ENCODE measurements at regions of chr6 and their contacts with region 1.

Region 1: DNA sequence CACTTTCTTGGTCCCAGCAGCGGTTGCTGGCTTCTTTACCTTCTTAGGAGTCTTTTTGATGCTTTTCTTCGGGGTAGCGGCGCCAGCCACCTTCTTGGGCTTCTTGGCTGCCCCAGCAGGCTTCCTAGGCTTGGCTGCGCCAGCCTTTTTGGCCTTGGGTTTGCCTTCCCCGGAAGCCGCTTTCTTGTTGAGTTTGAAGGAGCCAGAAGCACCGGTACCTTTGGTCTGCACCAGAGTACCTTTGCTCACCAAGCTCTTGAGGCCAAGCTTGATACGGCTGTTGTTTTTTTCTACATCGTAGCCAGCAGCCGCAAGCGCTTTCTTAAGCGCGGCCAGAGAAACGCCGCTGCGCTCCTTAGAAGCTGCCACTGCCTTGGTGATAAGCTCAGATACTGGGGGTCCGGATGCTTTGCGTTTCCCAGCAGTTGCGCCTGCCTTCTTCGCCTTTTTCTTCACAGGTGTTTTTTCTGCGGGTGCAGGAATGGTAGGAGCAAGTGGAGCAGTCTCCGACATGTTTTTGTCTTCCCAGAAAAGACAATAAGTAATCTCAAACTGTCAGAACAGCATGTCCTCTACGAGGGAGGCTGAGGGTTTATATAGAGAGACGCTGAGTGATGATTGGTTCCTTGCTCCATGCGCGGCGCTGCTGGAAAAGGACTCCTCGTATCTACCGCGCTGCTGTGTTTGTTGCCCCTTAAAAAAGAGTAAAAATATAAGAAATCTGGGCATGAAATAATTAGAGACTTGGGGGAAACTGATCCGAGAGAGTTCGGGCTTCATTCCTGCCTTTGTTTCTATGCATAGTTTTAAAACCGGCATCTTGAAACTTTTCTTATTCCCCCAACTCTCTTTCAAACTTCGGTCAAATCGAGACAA is 130.3 kb upstream of the BTN3A2 start:
- DNase-seq: peak; percentile 76
- ATAC-seq: peak; percentile 59
- H3K4me3 Mint-ChIP-seq: peak overlapping the region; percentile 94
- H3K27ac Mint-ChIP-seq: peak overlapping the region; percentile 100
- H3K4me1 Mint-ChIP-seq: peaks cover 36% of the 10 kb centered on the region
- H3K27me3 Mint-ChIP-seq: no peaks in the 10 kb centered on the region

Region 2: DNA sequence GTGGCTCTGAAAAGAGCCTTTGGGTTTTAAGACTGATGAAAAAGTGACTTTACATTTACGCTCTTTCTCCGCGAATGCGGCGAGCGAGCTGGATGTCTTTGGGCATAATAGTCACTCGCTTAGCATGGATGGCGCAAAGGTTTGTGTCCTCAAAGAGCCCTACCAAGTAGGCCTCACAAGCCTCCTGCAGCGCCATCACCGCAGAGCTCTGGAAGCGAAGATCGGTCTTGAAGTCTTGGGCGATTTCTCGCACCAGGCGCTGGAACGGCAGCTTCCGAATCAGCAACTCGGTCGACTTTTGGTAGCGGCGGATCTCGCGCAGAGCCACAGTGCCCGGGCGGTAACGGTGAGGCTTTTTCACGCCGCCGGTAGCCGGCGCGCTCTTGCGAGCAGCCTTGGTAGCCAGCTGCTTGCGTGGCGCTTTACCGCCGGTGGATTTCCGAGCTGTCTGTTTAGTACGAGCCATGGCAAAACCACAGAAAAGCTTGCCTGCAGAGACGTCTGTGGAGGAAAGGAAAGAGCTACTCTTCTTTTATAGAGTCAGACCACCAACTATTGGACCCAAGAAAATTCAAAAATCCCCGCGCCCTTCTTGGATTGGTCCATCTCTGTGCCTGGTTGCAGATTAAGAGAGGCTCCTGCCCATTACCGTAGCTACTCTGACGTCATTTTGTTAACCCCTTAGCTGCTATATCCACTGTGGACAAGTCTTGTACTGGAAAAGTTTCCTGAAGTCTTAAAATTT is 202.9 kb before region 1 on chr6:
- POLR2A ChIA-PET with region 1: interaction called, 119 read pairs
- DNase-seq: peak; percentile 84
- ATAC-seq: peak; percentile 66
- H3K4me3 Mint-ChIP-seq: peak overlapping the region; percentile 88
- H3K27ac Mint-ChIP-seq: peak overlapping the region; percentile 98
- H3K4me1 Mint-ChIP-seq: peaks cover 66% of the 10 kb centered on the region
- H3K27me3 Mint-ChIP-seq: peaks cover 3% of the 10 kb centered on the region

Region 3: DNA sequence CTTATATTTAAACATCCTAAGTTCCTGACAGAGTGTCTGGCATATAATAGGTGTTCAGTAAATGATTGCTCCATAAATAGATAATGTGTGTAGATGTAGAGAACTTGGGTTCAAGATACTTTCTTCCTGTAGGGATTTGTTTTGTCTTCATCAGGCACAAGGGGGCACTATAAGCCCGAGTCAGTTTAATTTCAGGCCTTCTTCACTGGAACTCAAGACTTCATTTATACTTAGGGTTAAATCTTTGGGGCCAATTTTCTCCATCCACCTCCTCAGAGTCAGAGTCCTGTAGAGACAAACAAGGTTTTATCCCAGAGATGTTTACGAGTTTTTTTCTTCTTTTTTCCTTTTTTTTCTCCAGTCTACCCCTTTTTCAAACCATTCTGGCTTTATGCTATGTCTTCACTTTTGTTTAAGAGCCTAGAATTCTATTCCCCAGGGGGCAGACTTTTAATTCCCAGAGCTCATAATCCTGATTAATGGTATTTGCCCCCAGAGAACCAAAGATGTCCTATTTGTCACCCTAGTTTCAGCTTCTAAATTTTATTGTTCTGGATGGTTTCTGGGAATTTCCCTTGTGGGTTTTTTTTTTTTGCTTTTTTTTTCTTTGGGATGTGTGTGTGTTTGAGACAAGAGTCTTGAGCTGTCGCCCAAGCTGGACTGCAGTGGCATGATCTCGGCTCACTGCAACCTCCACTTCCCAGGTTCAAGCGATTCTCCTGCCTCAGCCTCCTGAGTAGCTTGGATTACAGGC is 59.1 kb before region 1 on chr6:
- POLR2A ChIA-PET with region 1: interaction called, 126 read pairs
- DNase-seq: no peak
- ATAC-seq: no peak
- H3K4me3 Mint-ChIP-seq: peak overlapping the region; percentile 54
- H3K27ac Mint-ChIP-seq: peak overlapping the region; percentile 76
- H3K4me1 Mint-ChIP-seq: peaks cover 41% of the 10 kb centered on the region
- H3K27me3 Mint-ChIP-seq: no peaks in the 10 kb centered on the region

Region 4: GRCh38 chr6:26216356-26216885 is 18.2 kb before region 1 on chr6:
- POLR2A ChIA-PET with region 1: interaction called, 425 read pairs
- DNase-seq: peak; percentile 77
- ATAC-seq: peak; percentile 75
- H3K4me3 Mint-ChIP-seq: no peak overlapping the region
- H3K27ac Mint-ChIP-seq: no peak overlapping the region
- H3K4me1 Mint-ChIP-seq: peaks cover 32% of the 10 kb centered on the region
- H3K27me3 Mint-ChIP-seq: no peaks in the 10 kb centered on the region

Region 5: DNA sequence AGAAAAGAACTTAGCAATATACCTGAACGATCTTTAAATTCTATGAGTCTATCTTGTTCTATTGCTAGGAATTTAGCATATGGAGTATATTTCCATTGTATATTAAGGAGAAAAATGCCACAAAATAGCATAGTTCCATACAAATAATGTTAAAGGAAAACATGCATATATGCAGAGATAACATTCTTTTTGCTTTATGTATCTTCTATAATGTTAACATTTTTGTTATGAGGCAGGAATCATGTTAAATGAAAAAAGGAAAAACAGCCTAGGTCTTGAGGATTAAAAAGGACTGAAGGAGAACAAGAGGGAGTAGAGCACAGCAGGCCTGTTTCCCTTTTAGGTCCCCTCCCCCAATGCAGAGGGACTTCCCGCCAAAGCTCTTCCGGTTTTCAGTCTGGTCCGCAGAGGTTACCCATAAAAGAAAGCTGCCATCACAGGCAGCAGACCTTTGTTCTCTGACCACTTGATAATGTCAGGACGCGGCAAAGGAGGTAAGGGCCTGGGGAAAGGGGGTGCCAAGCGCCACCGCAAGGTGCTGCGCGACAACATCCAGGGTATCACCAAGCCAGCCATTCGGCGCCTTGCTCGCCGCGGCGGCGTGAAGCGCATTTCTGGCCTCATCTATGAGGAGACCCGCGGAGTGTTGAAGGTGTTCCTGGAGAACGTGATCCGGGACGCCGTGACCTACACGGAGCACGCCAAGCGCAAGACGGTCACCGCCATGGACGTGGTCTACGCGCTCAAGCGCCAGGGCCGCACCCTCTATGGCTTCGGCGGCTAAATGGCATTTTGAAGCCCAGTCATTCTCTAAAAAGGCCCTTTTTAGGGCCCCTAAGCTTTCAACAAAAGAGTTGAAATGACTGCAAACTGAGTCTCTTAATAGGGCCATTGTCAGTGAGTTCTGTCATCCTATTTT is 904.4 kb after region 1 on chr6:
- POLR2A ChIA-PET with region 1: interaction called, 57 read pairs
- DNase-seq: peak; percentile 81
- ATAC-seq: peak; percentile 73
- H3K4me3 Mint-ChIP-seq: peak overlapping the region; percentile 95
- H3K27ac Mint-ChIP-seq: peak overlapping the region; percentile 98
- H3K4me1 Mint-ChIP-seq: peaks cover 39% of the 10 kb centered on the region
- H3K27me3 Mint-ChIP-seq: no peaks in the 10 kb centered on the region

Region 6: GRCh38 chr6:27864906-27865849 is 1630.5 kb after region 1 on chr6:
- POLR2A ChIA-PET with region 1: interaction called, 60 read pairs
- DNase-seq: peak; percentile 83
- ATAC-seq: peak; percentile 56
- H3K4me3 Mint-ChIP-seq: peak overlapping the region; percentile 99
- H3K27ac Mint-ChIP-seq: peak overlapping the region; percentile 100
- H3K4me1 Mint-ChIP-seq: peaks cover 57% of the 10 kb centered on the region
- H3K27me3 Mint-ChIP-seq: no peaks in the 10 kb centered on the region

Measured in activated naive CD8-positive, alpha-beta T cell treated with anti-CD3 and anti-CD28 coated beads, Interleukin-2, amount 10 ng/mL, durations not matched to agents 7 days and 5 days (primary cell).